ENCODE measurements at regions of chr1 and their contacts with region 1.

Region 1: GRCh38 chr1:59046730-59047157 is 250.2 kb upstream of the FGGY start:
- DNase-seq: peak; percentile 79
- H3K4me3 Mint-ChIP-seq: peak overlapping the region; percentile 37
- H3K27ac Mint-ChIP-seq: peak overlapping the region; percentile 86
- H3K4me1 Mint-ChIP-seq: peaks cover 30% of the 10 kb centered on the region
- H3K27me3 Mint-ChIP-seq: no peaks in the 10 kb centered on the region

Region 2: GRCh38 chr1:58739856-58740466 is 306.8 kb before region 1 on chr1:
- CTCF ChIA-PET with region 1: no interaction called
- intact Hi-C with region 1: loop called (anchors 5 kb)
- DNase-seq: peak; percentile 15
- H3K4me3 Mint-ChIP-seq: no peak overlapping the region
- H3K27ac Mint-ChIP-seq: no peak overlapping the region
- H3K4me1 Mint-ChIP-seq: no peaks in the 10 kb centered on the region
- H3K27me3 Mint-ChIP-seq: no peaks in the 10 kb centered on the region

Region 3: DNA sequence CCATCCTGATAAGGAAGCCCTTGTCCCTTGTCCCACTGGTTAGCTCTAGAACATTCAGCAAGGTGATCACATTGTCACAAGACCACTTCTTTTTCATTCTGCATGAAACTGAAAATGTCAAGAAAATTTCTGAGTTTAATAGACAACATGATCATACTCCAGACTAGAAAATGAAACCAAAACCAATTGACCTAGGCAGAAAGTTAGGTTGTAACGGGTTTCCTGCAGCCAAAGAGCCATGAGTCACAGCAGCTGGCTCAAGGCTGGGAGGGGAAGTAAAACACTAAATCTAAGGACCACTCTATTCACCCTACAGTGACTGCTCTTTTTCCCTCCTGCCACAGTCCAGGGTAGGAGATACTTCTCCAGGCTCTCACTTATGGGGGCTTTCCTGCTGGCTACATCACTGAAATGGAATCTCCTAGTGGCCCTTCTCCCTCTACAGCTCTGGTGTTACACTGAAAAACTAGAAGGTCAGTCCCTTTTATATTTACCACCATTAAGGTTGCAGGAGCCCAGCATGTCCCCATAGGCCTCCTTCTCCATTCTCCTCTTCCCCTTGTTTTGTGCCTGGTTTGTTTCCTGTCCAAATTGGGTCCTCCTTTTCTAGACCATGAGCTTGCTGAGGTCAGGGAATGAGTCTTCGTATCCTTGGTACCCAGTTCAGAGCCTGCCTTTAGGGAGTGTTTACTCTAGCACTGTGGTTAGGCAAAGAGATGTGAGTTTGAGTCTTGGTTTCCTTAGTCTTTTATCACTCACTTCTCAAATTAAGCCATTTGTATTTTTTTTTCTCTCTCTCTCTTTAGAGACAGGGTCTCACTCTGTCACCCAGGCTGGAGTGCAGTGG is 26.4 kb before region 1 on chr1:
- CTCF ChIA-PET with region 1: no interaction called
- intact Hi-C with region 1: loop called (anchors 1 kb)
- DNase-seq: peak; percentile 67
- H3K4me3 Mint-ChIP-seq: peak overlapping the region; percentile 47
- H3K27ac Mint-ChIP-seq: peak overlapping the region; percentile 75
- H3K4me1 Mint-ChIP-seq: peaks cover 22% of the 10 kb centered on the region
- H3K27me3 Mint-ChIP-seq: no peaks in the 10 kb centered on the region

Region 4: GRCh38 chr1:59071289-59071688 is 24.5 kb after region 1 on chr1:
- CTCF ChIA-PET with region 1: interaction called, 6 read pairs
- intact Hi-C with region 1: loop called (anchors 1 kb)
- DNase-seq: peak; percentile 19
- H3K4me3 Mint-ChIP-seq: peak overlapping the region; percentile 37
- H3K27ac Mint-ChIP-seq: peak overlapping the region; percentile 82
- H3K4me1 Mint-ChIP-seq: peaks cover 23% of the 10 kb centered on the region
- H3K27me3 Mint-ChIP-seq: no peaks in the 10 kb centered on the region

Region 5: DNA sequence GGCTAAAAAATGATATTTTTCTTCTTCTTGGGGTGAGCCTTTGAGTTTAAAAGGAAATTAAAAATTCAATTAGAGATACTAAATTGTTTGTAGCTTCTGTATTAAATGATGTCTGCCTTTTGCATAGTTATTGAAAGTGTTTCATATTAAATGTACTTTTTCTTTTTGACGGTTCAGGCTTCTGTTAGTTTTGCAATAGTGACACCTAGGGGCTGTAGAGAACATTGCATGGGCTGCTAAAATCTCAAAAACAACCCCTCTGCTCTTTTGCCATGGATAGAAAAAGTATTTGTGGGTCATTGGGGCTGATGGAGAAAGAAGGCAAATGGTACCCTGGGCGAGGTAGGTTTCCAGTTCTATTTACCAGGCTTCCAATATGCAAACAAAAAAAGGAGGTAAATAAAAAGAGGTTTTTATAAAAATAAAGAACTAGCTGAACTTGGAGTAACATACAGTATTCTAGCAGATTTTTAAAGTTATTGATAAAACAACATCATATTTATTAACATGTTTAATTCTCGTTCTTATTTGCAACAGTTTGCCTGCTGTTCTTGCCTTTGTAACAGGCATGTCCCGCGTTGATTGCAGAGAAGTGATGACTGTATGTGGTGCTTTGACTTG is 652.6 kb after region 1 on chr1:
- CTCF ChIA-PET with region 1: interaction called, 9 read pairs
- intact Hi-C with region 1: loop called (anchors 10 kb)
- DNase-seq: peak; percentile 19
- H3K4me3 Mint-ChIP-seq: no peak overlapping the region
- H3K27ac Mint-ChIP-seq: no peak overlapping the region
- H3K4me1 Mint-ChIP-seq: peaks cover 15% of the 10 kb centered on the region
- H3K27me3 Mint-ChIP-seq: no peaks in the 10 kb centered on the region

Measured in activated naive CD4-positive, alpha-beta T cell treated with anti-CD3 and anti-CD28 coated beads for 36 hours (primary cell).